Activated CD4-positive, alpha-beta memory T cell treated with anti-CD3 and anti-CD28 coated beads, Interleukin-2, amount 10 ng/mL, durations not matched to agents 7 days and 5 days (primary cell): ENCODE measurements at regions of chr14 and their contacts with region 1.

Region 1: DNA sequence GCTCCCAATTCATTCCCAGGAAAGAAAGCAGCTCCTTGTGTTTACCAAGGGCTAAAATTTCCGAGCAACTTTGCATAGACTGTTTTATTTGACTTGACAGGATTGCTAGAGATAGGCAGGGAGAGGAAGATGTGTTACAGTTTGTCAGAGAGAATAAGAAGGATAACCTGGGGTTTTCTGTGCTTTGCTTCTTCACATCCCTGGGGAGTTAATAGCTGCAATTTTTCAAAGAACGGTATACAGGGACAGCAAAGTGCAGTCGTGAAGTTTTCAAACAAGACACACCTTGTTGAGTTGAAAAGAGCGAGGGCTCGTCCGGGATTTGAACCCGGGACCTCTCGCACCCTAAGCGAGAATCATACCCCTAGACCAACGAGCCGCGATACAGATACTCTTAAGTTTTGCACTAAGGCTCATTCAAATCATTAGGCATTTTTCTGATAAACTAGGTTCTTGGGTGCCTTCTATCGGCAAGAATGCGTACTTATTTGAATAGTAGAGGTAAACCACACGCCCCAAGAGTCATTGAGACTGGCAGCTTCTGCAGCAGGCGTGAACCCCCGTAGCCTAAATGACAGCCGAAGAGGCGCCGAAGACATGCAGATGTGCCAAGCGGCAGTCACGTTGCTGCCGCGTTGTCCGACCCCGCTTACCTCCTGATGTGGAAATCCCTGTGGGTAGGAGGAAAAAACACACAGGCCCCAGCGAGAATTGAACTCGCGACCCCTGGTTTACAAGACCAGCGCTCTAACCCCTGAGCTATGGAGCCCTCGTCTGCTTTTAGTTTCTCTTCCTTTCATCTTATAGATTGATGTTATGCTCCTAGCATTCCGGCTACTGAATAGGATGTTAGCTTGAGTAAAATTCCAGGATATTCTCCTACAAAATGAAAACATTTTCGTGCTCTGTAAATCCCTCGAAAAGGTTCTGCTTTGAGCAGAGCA is 22.2 kb upstream of the RNASE12 start:
- DNase-seq: peak; percentile 86
- H3K4me3 Mint-ChIP-seq: no peak overlapping the region
- H3K27ac Mint-ChIP-seq: no peak overlapping the region
- H3K4me1 Mint-ChIP-seq: peaks cover 21% of the 10 kb centered on the region
- H3K27me3 Mint-ChIP-seq: peaks cover 3% of the 10 kb centered on the region

Region 2: GRCh38 chr14:20327005-20327869 is 286.1 kb before region 1 on chr14:
- CTCF ChIA-PET with region 1: interaction called, 79 read pairs
- POLR2A ChIA-PET with region 1: interaction called, 10 read pairs
- DNase-seq: no peak
- H3K4me3 Mint-ChIP-seq: no peak overlapping the region
- H3K27ac Mint-ChIP-seq: peak overlapping the region; percentile 64
- H3K4me1 Mint-ChIP-seq: peaks cover 50% of the 10 kb centered on the region
- H3K27me3 Mint-ChIP-seq: no peaks in the 10 kb centered on the region

Region 3: DNA sequence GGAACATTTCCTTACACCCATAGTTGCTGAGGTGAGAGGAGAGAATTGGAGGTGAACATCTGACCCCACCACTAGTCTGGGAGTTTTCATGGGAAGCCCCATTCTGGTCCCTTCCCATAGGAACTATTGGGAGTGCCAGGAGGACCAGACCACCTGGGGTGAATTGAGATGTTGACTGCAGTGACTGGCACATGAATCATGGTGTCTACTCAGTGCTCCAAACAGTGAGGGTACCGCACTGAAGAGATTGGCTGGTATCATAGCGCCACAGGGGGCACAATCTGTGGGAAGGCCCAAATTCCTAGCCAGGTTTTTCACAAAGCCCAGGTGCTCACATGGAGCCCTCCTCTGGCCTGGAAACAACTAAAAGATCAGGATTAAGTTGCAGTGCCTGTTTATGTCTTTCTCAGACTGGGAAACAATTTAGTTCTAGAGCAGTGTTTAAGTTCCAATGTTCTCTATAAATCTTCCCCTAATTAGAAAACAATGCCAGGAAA is 48.8 kb before region 1 on chr14:
- CTCF ChIA-PET with region 1: no interaction called
- POLR2A ChIA-PET with region 1: no interaction called
- DNase-seq: no peak
- H3K4me3 Mint-ChIP-seq: no peak overlapping the region
- H3K27ac Mint-ChIP-seq: no peak overlapping the region
- H3K4me1 Mint-ChIP-seq: no peaks in the 10 kb centered on the region
- H3K27me3 Mint-ChIP-seq: peaks cover 2% of the 10 kb centered on the region

Region 4: DNA sequence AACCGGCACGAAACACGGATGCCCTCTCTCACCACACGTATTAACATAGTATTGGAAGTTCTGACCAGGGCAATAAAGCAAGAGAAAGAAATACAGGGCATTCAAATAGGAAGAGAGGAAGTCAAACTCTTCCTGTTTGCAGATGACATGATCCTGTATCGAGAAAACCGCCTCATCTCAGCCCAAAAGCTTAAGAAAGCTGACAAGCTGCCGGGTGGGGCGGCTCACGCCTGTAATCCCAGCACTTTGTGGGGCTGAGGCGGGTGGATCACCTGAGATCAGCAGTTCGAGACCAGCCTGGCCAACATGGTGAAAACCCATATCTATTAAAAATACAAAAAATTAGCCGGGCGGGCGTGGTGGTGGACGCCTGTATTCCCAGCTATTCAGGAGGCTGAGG is 10.4 kb after region 1 on chr14:
- CTCF ChIA-PET with region 1: interaction called, 7 read pairs
- POLR2A ChIA-PET with region 1: interaction called, 12 read pairs
- DNase-seq: no peak
- H3K4me3 Mint-ChIP-seq: peak overlapping the region; percentile 66
- H3K27ac Mint-ChIP-seq: no peak overlapping the region
- H3K4me1 Mint-ChIP-seq: peaks cover 55% of the 10 kb centered on the region
- H3K27me3 Mint-ChIP-seq: peaks cover 54% of the 10 kb centered on the region

Region 5: GRCh38 chr14:20632682-20633428 is 19.5 kb after region 1 on chr14:
- CTCF ChIA-PET with region 1: interaction called, 9 read pairs
- POLR2A ChIA-PET with region 1: interaction called, 14 read pairs
- DNase-seq: peak; percentile 72
- H3K4me3 Mint-ChIP-seq: peak overlapping the region; percentile 68
- H3K27ac Mint-ChIP-seq: peak overlapping the region; percentile 70
- H3K4me1 Mint-ChIP-seq: peaks cover 34% of the 10 kb centered on the region
- H3K27me3 Mint-ChIP-seq: peaks cover 78% of the 10 kb centered on the region

Region 6: DNA sequence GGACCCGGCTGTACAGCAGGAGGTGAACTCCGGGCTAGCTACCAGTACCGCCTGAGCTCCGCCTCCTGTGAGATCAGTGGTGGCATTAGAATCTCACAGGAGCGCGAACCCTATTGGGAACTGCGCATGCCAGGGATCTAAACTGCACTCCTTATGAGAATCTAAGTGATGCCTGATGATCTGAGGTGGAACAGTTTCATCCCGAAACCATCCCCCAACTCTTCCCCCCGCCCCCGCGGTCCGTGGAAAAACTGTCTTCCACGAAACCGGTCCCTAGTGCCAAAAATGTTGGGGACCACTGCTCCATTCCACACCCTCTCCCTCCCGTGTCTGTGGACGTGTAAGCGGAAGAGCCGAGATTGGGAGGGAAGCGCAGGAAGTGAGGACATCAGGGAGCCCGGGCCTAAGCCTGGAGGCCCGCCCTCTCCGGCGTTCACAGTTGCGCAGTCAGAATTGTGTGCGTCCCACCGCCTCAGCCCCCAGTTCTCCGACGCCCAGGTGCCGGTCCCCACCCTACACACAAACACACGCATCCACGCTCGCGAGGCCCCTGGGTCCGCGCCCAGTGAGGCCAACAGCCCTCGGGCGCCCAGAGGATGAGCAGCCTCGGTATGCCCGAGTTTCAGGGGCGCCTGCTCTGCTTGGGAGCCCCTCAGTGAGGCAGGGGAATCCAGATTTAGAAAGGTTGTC is 69.2 kb after region 1 on chr14:
- CTCF ChIA-PET with region 1: interaction called, 21 read pairs
- POLR2A ChIA-PET with region 1: interaction called, 13 read pairs
- DNase-seq: peak; percentile 78
- H3K4me3 Mint-ChIP-seq: no peak overlapping the region
- H3K27ac Mint-ChIP-seq: no peak overlapping the region
- H3K4me1 Mint-ChIP-seq: peaks cover 13% of the 10 kb centered on the region
- H3K27me3 Mint-ChIP-seq: no peaks in the 10 kb centered on the region

Region 7: GRCh38 chr14:20690848-20691523 is 77.6 kb after region 1 on chr14:
- CTCF ChIA-PET with region 1: interaction called, 26 read pairs
- POLR2A ChIA-PET with region 1: interaction called, 10 read pairs
- DNase-seq: peak; percentile 42
- H3K4me3 Mint-ChIP-seq: no peak overlapping the region
- H3K27ac Mint-ChIP-seq: peak overlapping the region; percentile 41
- H3K4me1 Mint-ChIP-seq: peaks cover 37% of the 10 kb centered on the region
- H3K27me3 Mint-ChIP-seq: no peaks in the 10 kb centered on the region